PC-9 (cell line): ENCODE measurements at regions of chr4 and their contacts with region 1.

Region 1: DNA sequence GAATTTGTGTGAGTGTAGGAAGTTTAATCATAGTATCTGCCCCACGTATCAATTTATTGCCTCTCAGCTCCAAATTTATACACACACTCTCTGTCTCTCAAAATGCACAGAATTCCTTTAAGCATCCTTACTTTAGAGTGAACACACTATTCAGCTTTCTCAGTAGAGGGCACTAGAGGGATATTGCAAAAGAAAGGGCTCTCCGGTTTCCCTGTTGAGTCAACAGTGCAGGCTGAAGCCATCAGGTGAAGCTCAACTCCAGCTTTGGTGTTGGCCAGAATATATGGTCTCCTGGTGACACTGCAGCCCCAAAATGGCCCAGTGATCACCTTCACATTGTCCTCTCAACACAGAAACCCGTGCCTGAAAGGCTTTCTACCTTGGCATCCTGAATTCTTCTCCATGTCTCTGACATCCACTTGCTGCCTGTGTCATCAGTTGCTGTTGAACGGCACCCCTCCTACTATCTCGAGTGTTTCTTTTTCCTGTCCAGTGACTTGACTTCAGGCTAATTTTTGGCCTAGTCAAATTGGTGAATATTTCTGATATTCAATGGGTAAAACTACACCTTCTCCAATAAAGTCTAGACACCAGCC is 670.5 kb downstream of the GABRG1 start:
- DNase-seq: peak in 1 of 2 experiments; percentile 33
- H3K4me3 ChIP-seq: no peak overlapping the region
- H3K27ac ChIP-seq: no peak overlapping the region
- H3K4me1 ChIP-seq: no peaks in the 10 kb centered on the region
- H3K27me3 ChIP-seq: no peaks in the 10 kb centered on the region
- CTCF ChIP-seq: peak; percentile 57

Region 2: DNA sequence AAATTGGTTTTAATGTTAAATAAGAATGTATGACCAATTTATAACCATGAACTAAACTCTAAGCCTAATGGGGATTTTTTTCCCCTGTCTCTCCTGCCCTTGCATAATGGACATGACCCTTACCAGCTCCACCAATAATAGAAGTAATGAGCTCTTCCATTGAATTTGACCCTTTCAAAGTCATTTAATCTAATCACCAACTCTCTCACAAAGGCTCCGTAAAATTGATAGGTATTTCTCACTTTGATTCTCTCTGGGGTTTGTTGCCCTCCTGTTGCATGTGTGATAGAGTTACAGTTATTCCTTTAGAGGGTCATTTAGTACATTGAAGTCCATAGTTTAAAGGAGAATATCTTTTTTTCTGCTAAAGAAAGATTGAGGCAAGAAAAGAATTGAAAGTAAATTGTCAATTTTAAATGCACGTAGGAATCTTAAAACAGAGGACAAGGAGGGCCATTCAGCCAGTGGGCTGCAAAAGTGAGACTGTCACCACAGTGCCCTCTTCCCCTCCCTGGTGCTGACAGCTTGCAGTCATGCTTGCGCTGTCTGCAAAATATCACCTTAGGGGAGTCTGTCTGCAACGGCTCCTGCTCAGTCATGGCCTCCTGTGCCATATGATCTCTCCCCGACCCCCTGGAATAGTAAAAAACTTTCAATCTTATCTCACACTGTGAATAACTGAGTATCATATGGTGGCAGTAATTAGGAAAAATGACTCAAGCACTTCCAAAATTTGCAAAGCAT is 419.5 kb before region 1 on chr4:
- CTCF ChIA-PET with region 1: no interaction called
- POLR2A ChIA-PET with region 1: no interaction called
- intact Hi-C with region 1: no loop called
- DNase-seq: no peak
- H3K4me3 ChIP-seq: no peak overlapping the region
- H3K27ac ChIP-seq: no peak overlapping the region
- H3K4me1 ChIP-seq: no peaks in the 10 kb centered on the region
- H3K27me3 ChIP-seq: no peaks in the 10 kb centered on the region
- CTCF ChIP-seq: no peak

Region 3: DNA sequence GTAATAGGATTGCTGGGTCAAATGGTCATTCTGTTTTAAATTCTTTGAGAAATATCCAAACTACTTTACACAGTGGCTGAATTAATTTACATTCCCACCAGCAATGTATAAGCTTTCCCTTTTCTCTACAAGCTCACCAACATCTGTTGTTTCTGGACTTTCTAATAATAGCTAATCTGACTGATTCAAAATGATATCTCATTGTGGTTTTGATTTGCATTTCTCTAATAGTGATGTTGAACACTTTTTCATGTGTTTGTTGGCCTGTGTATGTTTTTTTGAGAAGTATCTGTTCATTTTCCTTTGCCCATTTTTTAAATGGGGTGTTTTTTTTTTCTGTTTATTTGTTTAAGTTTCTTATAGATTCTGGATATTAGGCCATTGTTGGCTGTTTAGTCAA is 68.0 kb before region 1 on chr4:
- CTCF ChIA-PET with region 1: no interaction called
- POLR2A ChIA-PET with region 1: no interaction called
- intact Hi-C with region 1: no loop called
- DNase-seq: no peak
- H3K4me3 ChIP-seq: no peak overlapping the region
- H3K27ac ChIP-seq: no peak overlapping the region
- H3K4me1 ChIP-seq: no peaks in the 10 kb centered on the region
- H3K27me3 ChIP-seq: no peaks in the 10 kb centered on the region
- CTCF ChIP-seq: no peak

Region 4: DNA sequence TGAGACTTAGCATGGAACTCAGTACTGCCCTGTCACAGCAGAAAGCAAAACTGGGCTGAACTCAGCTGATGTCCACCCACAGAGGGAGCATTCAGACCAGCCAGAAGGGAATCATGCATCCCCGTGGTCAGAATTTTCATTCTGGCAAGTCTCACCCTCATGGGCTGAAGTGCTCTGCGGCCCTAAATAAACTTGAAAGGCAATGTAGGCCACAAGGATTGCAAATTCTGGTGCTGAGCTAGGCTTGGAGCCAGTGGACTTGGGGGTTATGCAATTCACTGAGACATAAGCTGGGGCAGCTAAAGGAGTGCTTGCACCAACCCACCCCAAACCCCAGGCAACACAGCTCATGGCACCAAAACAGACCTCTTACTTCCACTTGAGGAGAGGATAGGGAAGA is 176.4 kb after region 1 on chr4:
- CTCF ChIA-PET with region 1: no interaction called
- POLR2A ChIA-PET with region 1: no interaction called
- intact Hi-C with region 1: no loop called
- DNase-seq: no peak
- H3K4me3 ChIP-seq: no peak overlapping the region
- H3K27ac ChIP-seq: no peak overlapping the region
- H3K4me1 ChIP-seq: no peaks in the 10 kb centered on the region
- H3K27me3 ChIP-seq: no peaks in the 10 kb centered on the region
- CTCF ChIP-seq: no peak

Region 5: DNA sequence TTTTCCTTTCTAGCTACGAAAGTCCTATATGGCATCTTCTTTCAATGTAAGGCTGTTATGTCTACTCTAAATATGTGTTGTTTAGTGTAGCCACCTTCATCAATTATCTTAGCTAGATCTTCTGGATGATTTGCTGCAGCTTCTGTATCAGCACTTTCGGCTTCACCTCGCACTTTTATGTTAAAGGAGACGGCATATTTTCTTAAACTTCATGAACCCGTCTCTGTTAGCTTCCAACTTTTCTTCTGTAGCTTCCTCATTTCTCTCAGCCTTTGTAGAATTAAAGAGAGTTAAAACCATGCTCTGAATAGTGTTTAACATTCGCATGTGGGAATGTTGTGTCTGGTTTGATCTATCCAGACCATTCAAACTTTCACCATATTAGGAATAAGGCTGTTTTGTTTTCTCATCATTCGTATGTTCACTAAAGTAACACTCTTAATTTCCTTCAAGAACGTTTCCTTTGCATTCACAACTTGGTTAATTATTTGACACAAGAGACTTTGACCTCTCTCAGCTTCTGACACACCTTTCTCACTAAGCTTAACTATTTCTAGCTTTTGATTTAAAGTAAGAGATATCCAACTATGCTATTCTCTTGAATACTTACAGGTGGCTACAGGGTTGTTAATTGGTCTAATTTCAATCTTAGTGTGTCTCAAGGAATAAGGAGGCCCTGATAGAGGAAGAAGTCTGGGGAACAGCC is 193.7 kb after region 1 on chr4:
- CTCF ChIA-PET with region 1: no interaction called
- POLR2A ChIA-PET with region 1: no interaction called
- intact Hi-C with region 1: no loop called
- DNase-seq: no peak
- H3K4me3 ChIP-seq: no peak overlapping the region
- H3K27ac ChIP-seq: no peak overlapping the region
- H3K4me1 ChIP-seq: no peaks in the 10 kb centered on the region
- H3K27me3 ChIP-seq: no peaks in the 10 kb centered on the region
- CTCF ChIP-seq: no peak

Region 6: DNA sequence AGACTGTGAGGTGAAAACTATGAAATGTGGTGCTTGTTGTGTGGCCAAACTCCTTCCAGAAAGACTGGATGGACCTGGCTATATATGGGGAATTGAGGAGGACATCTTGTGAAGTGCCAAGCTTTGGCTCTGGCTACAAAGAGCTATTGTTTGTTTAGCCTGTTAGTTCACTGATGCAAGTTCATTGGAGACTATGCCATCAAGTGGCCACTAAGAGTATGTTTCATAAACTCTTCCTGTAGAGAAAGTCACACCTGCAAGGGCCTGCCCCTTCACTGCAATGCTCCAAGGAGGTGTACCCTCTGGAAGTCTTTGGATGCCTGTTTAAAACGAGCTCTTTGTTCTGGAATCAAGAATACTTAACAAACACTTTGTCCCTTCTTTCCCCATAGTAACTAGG is 288.5 kb after region 1 on chr4:
- CTCF ChIA-PET with region 1: interaction called, 4 read pairs
- POLR2A ChIA-PET with region 1: no interaction called
- intact Hi-C with region 1: loop called (anchors 5 kb)
- DNase-seq: no peak
- H3K4me3 ChIP-seq: no peak overlapping the region
- H3K27ac ChIP-seq: no peak overlapping the region
- H3K4me1 ChIP-seq: no peaks in the 10 kb centered on the region
- H3K27me3 ChIP-seq: no peaks in the 10 kb centered on the region
- CTCF ChIP-seq: peak; percentile 33; the same call in 1 of the 2 replicates